PC-3 (cell line): ENCODE measurements at regions of chr4 and their contacts with region 1.

Region 1: GRCh38 chr4:81040012-81040659 is 9.6 kb downstream of the BMP3 start:
- DNase-seq: peak; percentile 75
- ATAC-seq: peak; percentile 61
- H3K4me3 ChIP-seq: no peak overlapping the region
- H3K27ac ChIP-seq: no peak overlapping the region
- H3K4me1 ChIP-seq: peaks cover 14% of the 10 kb centered on the region
- H3K27me3 ChIP-seq: no peaks in the 10 kb centered on the region
- CTCF ChIP-seq: peak; percentile 82

Region 2: GRCh38 chr4:80619070-80619674 is 421.0 kb before region 1 on chr4:
- CTCF ChIA-PET with region 1: no interaction called
- POLR2A ChIA-PET with region 1: no interaction called
- intact Hi-C with region 1: loop called (anchors 1 kb)
- DNase-seq: peak; percentile 49
- ATAC-seq: 0 out of 2 replicates have a peak, but pooled peaks have one; percentile 48
- H3K4me3 ChIP-seq: no peak overlapping the region
- H3K27ac ChIP-seq: no peak overlapping the region
- H3K4me1 ChIP-seq: peaks cover 2% of the 10 kb centered on the region; the same call in 1 of the 2 replicates
- H3K27me3 ChIP-seq: no peaks in the 10 kb centered on the region
- CTCF ChIP-seq: peak; percentile 67